ENCODE measurements at regions of chr7 and their contacts with region 1.

Region 1: DNA sequence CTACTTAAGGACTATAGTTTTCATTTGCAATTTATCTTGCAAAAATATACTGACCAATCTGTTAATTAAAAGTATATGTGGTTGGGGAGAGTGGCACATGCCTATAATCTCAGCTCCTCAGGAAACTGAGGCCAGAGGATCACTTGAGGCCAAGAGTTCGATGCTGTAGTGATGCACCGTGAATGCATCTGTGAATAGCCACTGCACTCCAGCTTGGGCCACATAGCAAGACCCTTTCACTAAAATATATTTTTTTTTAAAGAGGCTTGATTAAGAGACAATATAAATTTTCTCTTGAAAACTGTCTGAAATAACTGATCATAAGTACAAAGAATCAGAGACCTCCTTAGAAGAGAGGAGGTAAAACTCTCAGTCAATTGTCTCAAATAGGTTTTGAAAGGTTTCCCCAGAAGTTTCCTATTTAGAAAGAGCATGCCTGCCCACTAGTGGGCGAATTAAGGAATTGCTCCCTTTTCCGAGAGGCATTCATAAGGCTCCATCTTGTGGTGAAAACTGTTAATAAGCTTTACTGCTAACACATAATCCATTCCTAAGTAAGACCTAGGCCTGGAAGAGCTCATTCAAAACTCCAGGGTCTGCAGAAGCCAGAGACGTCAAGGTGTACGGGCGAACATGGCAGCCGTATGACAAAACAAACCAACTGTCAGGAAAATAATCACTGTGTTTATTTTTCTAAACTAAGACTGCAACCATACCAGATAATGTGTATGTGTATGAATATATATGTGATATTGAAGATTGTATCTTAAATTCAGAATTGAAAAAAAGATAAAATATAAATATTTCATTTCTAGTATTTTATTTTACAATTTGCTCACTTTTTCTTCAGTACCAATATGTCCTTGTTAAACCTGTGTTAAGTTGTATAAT is 6.8 kb upstream of the TAS2R40 start:
- DNase-seq: peak; percentile 90
- H3K4me3 ChIP-seq: no peak overlapping the region
- H3K27ac ChIP-seq: no peak overlapping the region
- H3K4me1 ChIP-seq: no peaks in the 10 kb centered on the region
- H3K27me3 ChIP-seq: peaks cover 3 to 5% of the 10 kb centered on the region in 2 experiments
- CTCF ChIP-seq: peak; percentile 95 to 99
- POLR2A ChIP-seq: no peak

Region 2: DNA sequence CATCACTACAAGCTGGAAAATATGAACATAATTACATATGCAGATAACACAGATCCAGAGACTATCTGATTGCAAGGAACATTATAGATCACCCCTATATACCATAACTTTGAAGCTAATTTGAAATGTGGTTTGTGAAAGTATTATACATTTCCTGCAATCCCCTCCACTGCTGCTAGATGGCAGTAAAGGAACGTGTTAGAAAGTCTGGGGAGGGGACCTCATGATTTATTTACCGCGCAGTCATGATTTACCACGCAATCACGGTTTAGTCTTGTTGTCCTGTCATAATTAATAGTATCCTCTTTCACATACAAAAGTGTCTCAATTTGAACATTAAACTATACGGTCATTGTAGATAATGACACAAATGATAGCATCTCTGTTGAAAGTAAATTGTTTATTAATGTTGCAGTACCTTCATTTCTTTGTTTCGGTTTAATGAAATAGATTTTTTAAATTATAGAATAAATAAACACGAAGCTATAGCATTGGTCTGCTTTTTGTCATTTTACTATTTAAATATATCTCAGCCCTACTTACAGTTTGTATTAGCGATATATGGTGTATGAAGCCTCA is 611.1 kb before region 1 on chr7:
- CTCF ChIA-PET with region 1: interaction called, 12 read pairs
- POLR2A ChIA-PET with region 1: no interaction called
- dilution Hi-C with region 1: no loop called
- intact Hi-C with region 1: no loop called
- DNase-seq: peak; percentile 71
- H3K4me3 ChIP-seq: peak overlapping the region in 2 of 3 experiments; percentile 45 to 68
- H3K27ac ChIP-seq: no peak overlapping the region
- H3K4me1 ChIP-seq: peaks cover 7% of the 10 kb centered on the region
- H3K27me3 ChIP-seq: no peaks in the 10 kb centered on the region
- CTCF ChIP-seq: peak; percentile 67 to 75
- POLR2A ChIP-seq: no peak

Region 3: DNA sequence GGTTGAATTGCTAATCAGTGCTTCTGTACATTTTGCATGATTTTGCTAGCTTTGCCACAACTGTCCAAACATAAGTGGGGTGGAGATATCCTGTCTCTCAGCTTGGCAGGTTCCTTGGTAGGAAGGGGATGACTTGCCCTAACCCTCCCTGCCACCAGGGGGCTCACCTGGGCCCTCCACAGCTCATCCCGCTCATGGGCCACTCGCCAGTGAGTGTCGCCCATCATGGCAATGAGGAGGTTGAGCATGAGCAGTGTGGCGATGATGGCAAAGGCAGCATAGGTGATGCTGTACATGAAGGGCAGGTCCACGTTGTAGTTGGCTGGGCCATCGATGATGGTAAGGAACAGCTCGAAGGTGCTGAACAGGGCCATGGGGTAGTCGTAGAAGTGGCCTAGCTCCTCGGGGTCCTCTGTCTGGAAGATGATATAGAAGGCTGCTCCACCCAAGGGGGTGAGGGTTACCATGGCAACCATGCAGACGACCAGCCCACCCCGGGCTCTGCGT is 341.7 kb before region 1 on chr7:
- CTCF ChIA-PET with region 1: interaction called, 20 read pairs
- POLR2A ChIA-PET with region 1: no interaction called
- dilution Hi-C with region 1: no loop called
- intact Hi-C with region 1: no loop called
- DNase-seq: no peak
- H3K4me3 ChIP-seq: no peak overlapping the region
- H3K27ac ChIP-seq: no peak overlapping the region
- H3K4me1 ChIP-seq: no peaks in the 10 kb centered on the region
- H3K27me3 ChIP-seq: peaks cover 0 to 2% of the 10 kb centered on the region in 2 experiments
- CTCF ChIP-seq: peak; percentile 35 to 48
- POLR2A ChIP-seq: no peak

Region 4: GRCh38 chr7:142992464-142992863 is 222.6 kb before region 1 on chr7:
- CTCF ChIA-PET with region 1: interaction called, 11 read pairs
- POLR2A ChIA-PET with region 1: no interaction called
- dilution Hi-C with region 1: no loop called
- intact Hi-C with region 1: no loop called
- DNase-seq: no peak
- H3K4me3 ChIP-seq: no peak overlapping the region
- H3K27ac ChIP-seq: no peak overlapping the region
- H3K4me1 ChIP-seq: no peaks in the 10 kb centered on the region
- H3K27me3 ChIP-seq: peaks cover 0 to 4% of the 10 kb centered on the region in 2 experiments
- CTCF ChIP-seq: no peak
- POLR2A ChIP-seq: no peak

Region 5: DNA sequence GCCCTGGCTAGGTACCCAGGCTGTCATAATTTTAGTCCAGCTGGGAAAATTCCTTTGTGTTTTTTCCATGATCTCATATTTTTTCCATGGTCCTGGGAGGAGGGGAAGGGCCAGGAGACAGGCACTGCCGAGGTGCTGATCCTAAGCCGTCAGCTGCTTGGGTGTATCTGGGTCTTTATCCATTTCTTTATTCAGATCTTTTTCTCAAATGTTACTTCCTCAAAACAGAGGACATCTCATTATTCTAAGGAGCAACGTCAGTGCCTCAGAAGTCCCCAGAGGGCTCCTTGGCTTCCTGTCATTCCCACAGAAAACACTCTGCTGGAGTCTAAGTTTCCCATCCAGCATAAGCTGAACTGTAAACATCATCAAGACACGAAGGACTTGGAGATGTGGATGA is 165.7 kb before region 1 on chr7:
- CTCF ChIA-PET with region 1: interaction called, 10 read pairs
- POLR2A ChIA-PET with region 1: no interaction called
- dilution Hi-C with region 1: no loop called
- intact Hi-C with region 1: no loop called
- DNase-seq: no peak
- H3K4me3 ChIP-seq: no peak overlapping the region
- H3K27ac ChIP-seq: no peak overlapping the region
- H3K4me1 ChIP-seq: no peaks in the 10 kb centered on the region
- H3K27me3 ChIP-seq: peaks cover 0 to 2% of the 10 kb centered on the region in 2 experiments
- CTCF ChIP-seq: no peak
- POLR2A ChIP-seq: no peak

Region 6: GRCh38 chr7:143229054-143229790 is 14.2 kb after region 1 on chr7:
- CTCF ChIA-PET with region 1: interaction called, 28 read pairs
- POLR2A ChIA-PET with region 1: no interaction called
- dilution Hi-C with region 1: no loop called
- intact Hi-C with region 1: no loop called
- DNase-seq: no peak
- H3K4me3 ChIP-seq: no peak overlapping the region
- H3K27ac ChIP-seq: no peak overlapping the region
- H3K4me1 ChIP-seq: no peaks in the 10 kb centered on the region
- H3K27me3 ChIP-seq: peaks cover 13 to 18% of the 10 kb centered on the region in 2 experiments
- CTCF ChIP-seq: no peak
- POLR2A ChIP-seq: no peak